SK-N-SH (cell line): ENCODE measurements at regions of chr1 and their contacts with region 1.

Region 1: DNA sequence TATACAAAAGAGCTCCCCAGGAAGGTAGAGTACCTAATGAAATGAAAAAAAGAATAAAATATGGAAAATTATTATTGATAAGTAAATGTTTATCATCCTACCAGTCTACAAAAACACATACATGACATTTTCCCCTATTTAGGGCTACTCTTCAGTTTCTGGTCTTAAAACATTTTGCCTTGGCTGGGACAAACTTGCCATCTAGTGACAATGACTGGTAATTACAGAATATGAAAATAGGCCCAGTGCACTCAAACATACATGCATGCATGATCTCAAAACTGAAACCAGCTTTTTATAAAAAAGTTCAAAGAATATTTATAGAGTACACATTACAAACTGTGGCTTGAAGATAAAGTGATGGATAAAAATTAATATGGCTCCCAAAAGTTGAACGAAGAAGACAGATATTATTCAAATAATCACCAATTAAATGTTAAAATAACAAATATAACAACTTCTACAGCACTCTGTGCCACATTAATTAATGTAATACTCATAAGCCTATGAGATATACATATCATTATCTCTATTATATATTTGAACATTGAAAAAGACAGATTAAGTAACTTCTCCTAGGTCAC is 10.5 kb upstream of the RNPC3 start:
- DNase-seq: peak; percentile 9
- H3K4me3 ChIP-seq: no peak overlapping the region; a peak in 1 of 4 replicates
- H3K27ac ChIP-seq: no peak overlapping the region
- H3K4me1 ChIP-seq: peaks cover 0 to 6% of the 10 kb centered on the region in 2 experiments; a peak in 1 of 4 replicates
- H3K27me3 ChIP-seq: no peaks in the 10 kb centered on the region
- CTCF ChIP-seq: peak; percentile 86
- EP300 ChIP-seq: no peak
- RAD21 ChIP-seq: peak; percentile 93

Region 2: DNA sequence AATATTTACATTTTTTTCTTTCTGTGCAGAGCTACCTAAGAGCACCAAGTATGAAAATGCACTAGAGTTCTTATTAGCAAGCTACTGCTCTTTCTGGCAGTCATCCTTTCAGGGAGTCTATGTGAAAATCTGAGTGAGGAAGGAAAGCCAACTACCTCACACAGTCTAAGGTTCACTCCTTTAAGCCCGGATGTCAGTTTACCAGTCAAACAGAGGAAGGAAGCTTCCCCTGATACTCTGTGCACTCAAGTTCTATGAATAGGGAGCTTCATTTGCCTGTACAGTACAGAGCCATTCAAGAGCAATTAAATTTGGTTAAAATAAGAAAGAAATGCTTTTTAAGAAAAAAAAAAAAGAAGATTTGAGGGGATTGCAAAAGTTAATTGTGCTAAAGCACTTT is 413.6 kb before region 1 on chr1:
- CTCF ChIA-PET with region 1: interaction called, 15 read pairs
- POLR2A ChIA-PET with region 1: no interaction called
- DNase-seq: no peak
- H3K4me3 ChIP-seq: no peak overlapping the region
- H3K27ac ChIP-seq: no peak overlapping the region
- H3K4me1 ChIP-seq: no peaks in the 10 kb centered on the region; a peak in 1 of 4 replicates
- H3K27me3 ChIP-seq: no peaks in the 10 kb centered on the region
- CTCF ChIP-seq: no peak
- EP300 ChIP-seq: no peak
- RAD21 ChIP-seq: no peak

Region 3: GRCh38 chr1:103106426-103107341 is 408.3 kb before region 1 on chr1:
- CTCF ChIA-PET with region 1: interaction called, 15 read pairs
- POLR2A ChIA-PET with region 1: no interaction called
- DNase-seq: peak; percentile 62
- H3K4me3 ChIP-seq: peak overlapping the region; percentile 48 to 68
- H3K27ac ChIP-seq: peak overlapping the region in 1 of 2 experiments; percentile 38; a peak in 3 of 4 replicates
- H3K4me1 ChIP-seq: peaks cover 2 to 5% of the 10 kb centered on the region in 2 experiments; a peak in 3 of 4 replicates
- H3K27me3 ChIP-seq: no peaks in the 10 kb centered on the region
- CTCF ChIP-seq: peak; percentile 76
- EP300 ChIP-seq: no peak
- RAD21 ChIP-seq: peak; percentile 70

Region 4: GRCh38 chr1:103496014-103496635 is 18.9 kb before region 1 on chr1:
- CTCF ChIA-PET with region 1: interaction called, 14 read pairs
- POLR2A ChIA-PET with region 1: no interaction called
- DNase-seq: no peak
- H3K4me3 ChIP-seq: no peak overlapping the region
- H3K27ac ChIP-seq: peak overlapping the region in 1 of 2 experiments; percentile 27; a peak in 1 of 4 replicates
- H3K4me1 ChIP-seq: no peaks in the 10 kb centered on the region
- H3K27me3 ChIP-seq: no peaks in the 10 kb centered on the region
- CTCF ChIP-seq: no peak
- EP300 ChIP-seq: peak in 1 of 2 experiments; percentile 57; a peak in 1 of 4 replicates
- RAD21 ChIP-seq: no peak

Region 5: DNA sequence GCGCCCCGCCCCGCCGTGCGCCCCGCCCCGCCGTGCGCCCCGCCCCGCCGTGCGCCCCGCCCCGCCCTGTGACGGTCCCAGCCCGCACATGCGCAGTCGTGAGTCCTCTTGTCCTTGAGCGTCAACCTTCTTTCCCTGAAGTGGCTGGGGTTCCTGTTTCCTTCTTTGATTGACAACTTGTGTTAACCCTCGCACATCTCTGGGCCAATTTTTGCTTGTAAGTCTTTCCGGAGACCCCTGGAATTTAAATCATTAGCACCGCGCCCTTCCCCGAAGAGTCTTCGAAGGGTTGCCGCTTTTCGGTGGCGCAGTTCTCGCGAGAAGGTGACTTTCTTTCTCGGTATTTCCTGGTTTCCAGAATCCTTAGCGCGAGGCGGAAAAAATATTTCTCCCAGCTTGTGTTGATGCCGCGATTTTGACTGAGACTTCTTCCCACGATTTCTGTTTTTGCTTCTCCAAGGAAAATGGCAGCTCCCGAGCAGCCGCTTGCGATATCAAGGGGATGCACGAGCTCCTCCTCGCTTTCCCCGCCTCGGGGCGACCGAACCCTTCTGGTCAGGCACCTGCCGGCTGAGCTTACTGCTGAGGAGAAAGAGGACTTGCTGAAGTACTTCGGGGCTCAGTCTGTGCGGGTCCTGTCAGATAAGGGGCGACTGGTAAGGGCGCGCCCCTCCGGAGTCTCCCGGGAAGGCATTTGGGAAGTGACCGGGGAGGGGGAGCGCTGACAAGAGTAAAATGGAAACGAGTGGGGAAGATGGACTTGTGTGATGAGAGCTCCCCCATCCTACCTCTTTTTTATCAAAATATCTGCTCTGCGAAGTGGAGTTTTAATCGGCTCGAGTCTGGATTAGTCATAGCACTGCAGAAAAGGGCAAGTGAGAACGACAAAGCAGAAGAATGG is 10.8 kb after region 1 on chr1 and contains the start of gene RNPC3:
- CTCF ChIA-PET with region 1: interaction called, 23 read pairs
- POLR2A ChIA-PET with region 1: no interaction called
- DNase-seq: peak; percentile 82
- H3K4me3 ChIP-seq: peak within 1 kb of the TSS; percentile 81 to 97
- H3K27ac ChIP-seq: peak within 1 kb of the TSS; percentile 95
- H3K4me1 ChIP-seq: peaks cover 0 to 5% of the 10 kb centered on the region in 2 experiments; a peak in 1 of 4 replicates
- H3K27me3 ChIP-seq: no peaks in the 10 kb centered on the region
- CTCF ChIP-seq: 0 out of 2 replicates have a peak, but pooled peaks have one; percentile 10
- EP300 ChIP-seq: no peak
- RAD21 ChIP-seq: no peak
- polyA plus RNA-seq, gene RNPC3: 10.0 and 20.6 TPM in 2 replicates

Region 6: GRCh38 chr1:103538226-103538625 is 23.2 kb after region 1 on chr1:
- CTCF ChIA-PET with region 1: no interaction called
- POLR2A ChIA-PET with region 1: no interaction called
- DNase-seq: no peak
- H3K4me3 ChIP-seq: no peak overlapping the region
- H3K27ac ChIP-seq: no peak overlapping the region
- H3K4me1 ChIP-seq: no peaks in the 10 kb centered on the region
- H3K27me3 ChIP-seq: no peaks in the 10 kb centered on the region
- CTCF ChIP-seq: no peak
- EP300 ChIP-seq: no peak
- RAD21 ChIP-seq: no peak